Activated CD4-positive, alpha-beta T cell treated with anti-CD3 and anti-CD28 coated beads, Interleukin-2, amount 10 ng/mL, durations not matched to agents 24 days and 14 days (primary cell): ENCODE measurements at regions of chr7 and their contacts with region 1.

Region 1: DNA sequence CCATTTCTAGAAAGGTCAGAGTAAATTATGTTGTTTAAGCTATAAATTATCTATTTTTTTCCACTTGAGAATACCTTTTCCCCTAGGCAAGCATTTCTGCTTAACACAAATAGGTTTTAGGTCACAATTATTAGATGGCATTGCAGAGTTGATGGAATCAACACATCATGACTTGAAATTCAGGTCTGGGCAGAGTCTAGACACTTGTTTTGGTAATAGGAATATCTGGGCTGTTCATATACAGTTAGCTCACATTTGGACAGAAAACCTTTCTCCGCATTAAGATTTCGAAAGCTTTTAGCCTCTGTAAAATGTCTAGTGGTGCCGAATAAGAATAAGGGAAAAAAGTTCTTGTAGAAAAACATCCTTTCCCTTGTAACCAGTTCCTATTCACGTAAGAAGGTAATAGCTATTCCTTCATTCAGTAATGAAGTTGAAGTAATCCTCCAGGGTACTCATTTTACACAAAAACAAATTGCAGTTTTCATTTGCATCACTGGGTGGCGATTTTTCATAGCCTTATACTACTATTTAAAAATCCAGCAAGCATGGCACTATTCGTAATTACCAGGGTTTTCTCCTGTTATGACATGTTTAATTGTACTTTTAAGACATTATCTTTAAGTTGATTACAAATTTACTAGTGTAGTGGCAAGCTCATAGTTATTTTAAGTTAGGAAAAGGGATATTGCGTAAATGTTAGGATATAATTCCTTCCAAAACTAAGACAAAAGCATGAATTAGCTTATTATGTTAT is 37.0 kb downstream of the RPA3 start:
- DNase-seq: peak; percentile 84
- H3K4me3 Mint-ChIP-seq: no peak overlapping the region
- H3K27ac Mint-ChIP-seq: no peak overlapping the region
- H3K4me1 Mint-ChIP-seq: peaks cover 8% of the 10 kb centered on the region
- H3K27me3 Mint-ChIP-seq: no peaks in the 10 kb centered on the region

Region 2: DNA sequence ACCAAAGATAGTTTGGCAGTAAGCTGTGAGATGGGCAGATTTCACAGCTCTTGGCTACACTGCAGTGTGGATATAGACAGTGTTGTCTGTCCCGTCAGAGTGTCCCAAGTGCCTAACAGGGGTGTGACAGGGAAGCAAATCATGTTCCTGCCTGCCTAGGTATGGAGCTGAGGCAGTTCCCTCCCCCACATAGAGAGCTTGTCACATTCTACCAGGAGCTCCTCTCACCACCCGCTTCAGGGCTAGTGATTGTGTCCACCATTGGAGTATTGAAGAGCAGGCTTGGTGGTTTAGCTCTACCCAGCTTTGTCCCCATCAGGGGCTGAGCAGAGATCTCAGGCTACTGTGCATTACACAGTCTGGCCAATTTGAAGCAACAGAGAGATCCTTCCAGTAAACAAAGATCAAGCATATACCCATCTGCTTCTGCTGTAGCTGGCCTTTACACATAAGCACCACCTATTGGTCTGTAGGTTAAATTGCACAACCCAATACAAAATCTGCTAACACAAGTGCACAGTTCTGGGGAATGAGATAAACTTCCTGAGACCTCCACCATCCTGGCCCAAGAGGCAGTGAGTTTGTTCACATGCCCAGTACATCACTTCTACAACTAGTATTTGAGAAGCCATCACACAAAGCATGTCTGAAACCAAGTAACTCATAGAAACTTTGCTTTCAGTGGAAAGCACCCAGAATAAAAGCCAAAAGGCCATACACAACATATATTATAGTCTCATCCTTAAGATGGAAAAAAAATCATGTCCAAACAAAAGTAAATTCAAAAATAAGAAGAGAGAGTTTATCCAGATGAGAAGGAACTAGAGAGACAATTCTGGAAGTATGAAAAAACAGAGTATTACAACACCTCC is 354.5 kb after region 1 on chr7:
- intact Hi-C with region 1: loop called (anchors 5 kb)
- DNase-seq: peak; percentile 60
- H3K4me3 Mint-ChIP-seq: no peak overlapping the region
- H3K27ac Mint-ChIP-seq: no peak overlapping the region
- H3K4me1 Mint-ChIP-seq: peaks cover 10% of the 10 kb centered on the region
- H3K27me3 Mint-ChIP-seq: no peaks in the 10 kb centered on the region

Region 3: DNA sequence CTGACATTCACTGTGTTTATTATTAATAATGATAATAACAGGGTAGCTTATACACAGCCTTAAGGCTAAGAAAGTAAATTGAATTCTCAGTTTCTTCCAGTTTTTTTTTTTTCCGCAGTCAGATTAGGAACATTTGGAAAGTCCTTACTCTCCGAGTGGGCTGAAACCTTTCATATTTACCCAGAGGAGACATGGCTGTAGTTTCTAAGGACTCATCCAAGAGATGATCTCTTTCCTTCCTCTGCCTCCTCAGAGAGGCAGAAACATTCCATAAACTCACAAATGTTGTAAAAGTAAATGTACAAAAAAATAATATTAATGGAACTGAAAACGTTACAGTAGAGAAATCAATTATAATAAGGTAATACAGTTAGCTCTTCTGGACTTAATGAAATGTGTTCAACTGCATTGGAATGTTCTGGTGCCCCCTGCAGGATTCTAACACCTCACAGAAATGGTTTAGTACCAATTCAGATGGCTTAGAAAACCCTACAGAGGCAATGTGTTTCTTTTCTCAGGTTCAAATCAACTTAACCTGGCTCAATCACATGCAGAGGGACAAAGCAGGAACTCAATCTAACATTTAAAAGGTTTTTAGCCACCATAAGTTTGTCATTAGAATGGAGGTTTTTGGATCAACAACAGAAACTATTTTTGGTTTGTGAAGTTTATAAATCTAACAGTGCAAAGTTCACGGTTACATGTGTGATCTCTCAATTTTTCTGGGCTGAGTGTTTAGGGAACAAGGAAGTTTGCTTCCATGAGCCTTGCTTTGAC is 508.9 kb after region 1 on chr7:
- intact Hi-C with region 1: loop called (anchors 1 kb)
- DNase-seq: peak; percentile 89
- H3K4me3 Mint-ChIP-seq: no peak overlapping the region
- H3K27ac Mint-ChIP-seq: no peak overlapping the region
- H3K4me1 Mint-ChIP-seq: peaks cover 31% of the 10 kb centered on the region
- H3K27me3 Mint-ChIP-seq: peaks cover 5% of the 10 kb centered on the region

Region 4: GRCh38 chr7:8295638-8296361 is 614.4 kb after region 1 on chr7:
- intact Hi-C with region 1: loop called (anchors 5 kb)
- DNase-seq: peak; percentile 80
- H3K4me3 Mint-ChIP-seq: no peak overlapping the region
- H3K27ac Mint-ChIP-seq: no peak overlapping the region
- H3K4me1 Mint-ChIP-seq: peaks cover 3% of the 10 kb centered on the region
- H3K27me3 Mint-ChIP-seq: peaks cover 28% of the 10 kb centered on the region